CD4-positive, alpha-beta T cell (primary cell): ENCODE measurements at regions of chr10 and their contacts with region 1.

Region 1: DNA sequence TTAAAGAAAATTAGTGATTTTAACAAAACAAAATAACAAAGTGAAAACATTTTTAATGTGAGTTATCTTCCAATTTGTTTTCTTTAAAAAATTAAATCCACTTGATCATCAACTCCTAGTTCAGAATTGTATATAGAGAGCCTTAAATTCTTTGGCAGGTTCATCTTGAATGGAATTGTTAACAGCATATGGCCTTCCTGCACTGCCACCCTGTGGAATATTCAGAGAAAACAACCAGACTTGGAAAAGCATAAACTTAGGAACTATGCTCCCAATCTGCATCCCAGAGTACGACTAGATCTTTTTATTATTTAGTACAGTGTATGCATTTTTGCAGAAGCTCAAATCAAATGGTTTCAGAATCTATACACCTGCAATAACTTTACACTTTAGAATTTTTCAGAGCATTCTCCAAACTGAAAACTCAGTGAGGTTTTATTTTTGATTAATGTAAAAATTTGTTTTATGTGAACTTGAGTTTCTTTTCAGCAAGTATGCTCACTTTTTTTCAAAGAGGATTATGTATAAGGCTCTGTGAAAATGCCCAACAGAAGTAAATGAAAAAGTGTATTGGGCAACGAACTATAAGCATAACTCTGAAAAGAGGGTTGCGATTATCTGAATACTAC is 44.9 kb upstream of the ANK3 start:
- DNase-seq: peak in 3 of 14 experiments; percentile 14 to 26 (median 25)
- ATAC-seq: no peak
- H3K4me3 ChIP-seq: no peak overlapping the region
- H3K4me3 Mint-ChIP-seq: no peak overlapping the region
- H3K27ac ChIP-seq: no peak overlapping the region
- H3K27ac Mint-ChIP-seq: no peak overlapping the region
- H3K4me1 ChIP-seq: no peaks in the 10 kb centered on the region
- H3K4me1 Mint-ChIP-seq: no peaks in the 10 kb centered on the region
- H3K27me3 ChIP-seq: no peaks in the 10 kb centered on the region
- H3K27me3 Mint-ChIP-seq: no peaks in the 10 kb centered on the region
- CTCF ChIP-seq: peak; percentile 54

Region 2: DNA sequence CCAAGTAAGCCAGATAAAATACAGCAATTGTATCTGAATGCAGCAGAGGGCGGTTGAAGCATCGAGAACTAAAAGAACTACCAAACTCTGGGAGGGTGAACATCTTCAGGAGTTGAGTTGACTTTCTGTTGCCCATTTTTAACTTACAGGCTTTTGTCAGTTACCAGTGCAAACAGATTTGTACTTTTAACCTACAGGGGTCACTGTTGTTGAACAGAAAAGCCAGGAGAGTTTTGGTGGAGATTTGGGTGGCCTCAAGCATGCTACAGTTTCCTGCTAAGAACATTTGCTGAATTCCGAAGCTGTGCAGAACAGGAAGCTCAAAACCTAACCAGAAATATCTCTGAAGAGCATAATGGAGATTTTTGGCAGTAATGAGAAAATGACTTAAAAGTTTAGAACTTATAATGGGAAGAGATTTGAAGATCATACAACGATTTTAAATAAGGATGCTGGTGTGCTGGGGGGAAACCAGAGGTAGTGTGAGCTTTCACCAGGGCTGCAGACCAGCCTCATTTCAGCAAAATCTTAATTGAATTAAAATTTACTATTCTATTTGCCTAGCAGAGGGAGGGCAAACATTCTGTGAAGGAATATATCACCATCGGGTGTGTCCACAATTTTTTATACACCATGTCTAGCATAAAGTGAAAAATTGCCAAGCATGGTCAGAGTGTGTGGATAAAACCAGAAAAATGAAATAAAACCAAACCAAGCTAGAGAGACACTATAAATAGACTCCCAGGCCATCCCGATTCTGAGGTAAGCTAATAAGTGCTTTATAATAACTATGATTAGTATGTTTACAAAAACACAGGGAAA is 319.6 kb before region 1 on chr10:
- CTCF ChIA-PET with region 1: no interaction called
- POLR2A ChIA-PET with region 1: no interaction called
- intact Hi-C with region 1: loop called in 1 of 2 experiments (anchors 10 kb)
- DNase-seq: peak in 4 of 14 experiments; percentile 4 to 51 (median 38)
- ATAC-seq: peak; percentile 68
- H3K4me3 ChIP-seq: no peak overlapping the region
- H3K4me3 Mint-ChIP-seq: no peak overlapping the region
- H3K27ac ChIP-seq: no peak overlapping the region
- H3K27ac Mint-ChIP-seq: no peak overlapping the region
- H3K4me1 ChIP-seq: no peaks in the 10 kb centered on the region
- H3K4me1 Mint-ChIP-seq: no peaks in the 10 kb centered on the region
- H3K27me3 ChIP-seq: no peaks in the 10 kb centered on the region
- H3K27me3 Mint-ChIP-seq: no peaks in the 10 kb centered on the region
- CTCF ChIP-seq: peak; percentile 36

Region 3: GRCh38 chr10:60495338-60496055 is 61.0 kb after region 1 on chr10:
- CTCF ChIA-PET with region 1: no interaction called
- POLR2A ChIA-PET with region 1: no interaction called
- intact Hi-C with region 1: no loop called
- DNase-seq: no peak
- ATAC-seq: no peak
- H3K4me3 ChIP-seq: no peak overlapping the region
- H3K4me3 Mint-ChIP-seq: no peak overlapping the region
- H3K27ac ChIP-seq: no peak overlapping the region
- H3K27ac Mint-ChIP-seq: no peak overlapping the region
- H3K4me1 ChIP-seq: no peaks in the 10 kb centered on the region
- H3K4me1 Mint-ChIP-seq: peaks cover 41% of the 10 kb centered on the region
- H3K27me3 ChIP-seq: no peaks in the 10 kb centered on the region
- H3K27me3 Mint-ChIP-seq: no peaks in the 10 kb centered on the region
- CTCF ChIP-seq: no peak